RWPE1 (cell line): ENCODE measurements at regions of chrX and their contacts with region 1.

Region 1: DNA sequence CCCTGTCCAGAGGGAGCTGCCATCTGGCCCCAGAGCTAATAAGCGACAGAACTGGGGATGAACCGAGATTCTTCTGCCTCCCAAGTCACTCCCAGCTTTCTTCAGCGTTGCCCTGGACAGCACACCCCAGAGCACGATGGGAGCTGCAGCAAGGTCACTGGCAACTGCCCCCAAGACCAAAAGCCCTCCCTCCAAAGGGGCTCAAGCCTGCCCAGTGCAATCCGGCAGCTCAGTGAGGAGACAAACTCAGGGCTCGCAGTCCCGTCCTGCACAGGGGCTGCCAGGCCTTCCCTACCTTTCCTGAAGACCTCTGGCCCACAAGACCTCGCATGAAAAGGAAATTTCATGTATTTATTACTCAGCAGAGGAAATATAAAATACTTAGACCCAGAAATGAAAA is 174.8 kb downstream of the BCOR start:
- DNase-seq: no peak
- H3K27ac ChIP-seq: no peak overlapping the region
- CTCF ChIP-seq: no peak

Region 2: DNA sequence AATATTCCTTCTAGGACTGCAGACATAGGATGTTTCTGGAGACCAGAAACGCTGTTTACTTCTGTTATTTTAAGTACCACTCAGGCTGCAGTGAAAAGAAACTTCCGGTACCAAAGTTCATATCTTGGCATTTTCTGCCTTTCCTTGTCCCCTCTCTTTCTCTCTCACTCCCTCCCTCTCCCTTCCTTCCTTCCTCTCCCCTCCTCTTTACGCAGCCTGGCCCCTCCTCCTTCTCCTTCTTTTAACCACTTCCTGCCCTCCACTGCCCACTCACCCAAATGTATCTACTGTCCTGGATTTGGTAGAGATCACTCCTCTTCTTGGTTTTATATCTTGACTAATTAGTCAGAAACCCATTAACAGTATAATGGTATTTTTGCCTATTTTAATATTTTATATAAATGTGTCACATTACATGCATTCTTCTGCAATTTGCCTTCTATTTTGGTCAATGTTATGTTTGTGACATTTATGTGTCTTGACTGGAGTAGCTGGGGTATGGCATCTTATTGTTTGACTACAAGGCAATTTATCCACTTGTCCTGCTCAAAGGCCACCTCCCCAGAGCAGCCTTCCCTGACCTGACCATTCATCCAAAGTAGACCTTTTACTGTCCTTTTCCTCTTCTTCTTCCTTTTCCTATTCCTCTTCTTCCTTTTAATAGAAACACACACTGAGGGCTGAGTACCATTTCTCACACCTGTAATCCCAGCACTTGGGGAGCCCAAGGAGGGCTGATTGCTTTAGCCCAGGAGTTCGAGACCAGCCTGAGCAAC is 117.9 kb after region 1 on chrX:
- CTCF ChIA-PET with region 1: no interaction called
- POLR2A ChIA-PET with region 1: no interaction called
- DNase-seq: no peak
- H3K27ac ChIP-seq: no peak overlapping the region
- CTCF ChIP-seq: no peak

Region 3: GRCh38 chrX:40158036-40158706 is 235.2 kb after region 1 on chrX:
- CTCF ChIA-PET with region 1: no interaction called
- POLR2A ChIA-PET with region 1: no interaction called
- DNase-seq: no peak
- H3K27ac ChIP-seq: peak overlapping the region; percentile 34; the same call in 1 of the 2 replicates
- CTCF ChIP-seq: peak; percentile 57

Region 4: DNA sequence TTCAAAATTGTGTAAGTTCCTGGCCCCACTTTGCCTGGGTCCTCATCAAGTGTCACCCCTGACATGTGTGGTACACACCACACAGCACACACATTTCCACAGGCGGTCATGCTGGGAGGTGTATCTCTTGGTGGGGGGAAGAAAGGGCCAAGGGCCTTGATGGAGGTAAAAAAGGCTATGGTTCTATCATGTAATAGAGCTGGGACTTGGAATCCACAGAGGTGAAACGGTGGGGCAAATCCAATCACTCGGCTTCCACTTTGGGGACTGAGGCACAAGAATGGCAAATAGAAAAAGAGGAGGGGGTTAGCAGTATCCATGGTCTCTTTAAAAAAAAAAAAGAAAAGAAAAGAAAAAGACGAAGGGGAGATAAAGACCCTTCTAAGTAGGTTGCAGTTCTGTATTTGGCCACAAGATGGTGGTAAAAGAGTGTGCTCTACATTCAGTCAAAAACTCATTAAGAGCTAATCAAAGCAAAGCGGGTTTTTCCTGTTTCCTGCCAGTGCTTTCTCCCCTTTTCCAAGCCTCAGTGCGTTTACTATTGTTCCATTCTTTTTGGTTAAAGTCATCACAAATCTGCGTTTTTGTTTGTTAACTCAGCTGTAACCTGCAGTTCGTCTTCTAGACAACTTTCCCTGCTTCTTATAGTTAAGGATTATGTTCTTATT is 620.9 kb after region 1 on chrX:
- CTCF ChIA-PET with region 1: interaction called, 11 read pairs
- POLR2A ChIA-PET with region 1: no interaction called
- DNase-seq: no peak
- H3K27ac ChIP-seq: no peak overlapping the region
- CTCF ChIP-seq: peak; percentile 74